ENCODE measurements at regions of chr1 and their contacts with region 1.

Region 1: DNA sequence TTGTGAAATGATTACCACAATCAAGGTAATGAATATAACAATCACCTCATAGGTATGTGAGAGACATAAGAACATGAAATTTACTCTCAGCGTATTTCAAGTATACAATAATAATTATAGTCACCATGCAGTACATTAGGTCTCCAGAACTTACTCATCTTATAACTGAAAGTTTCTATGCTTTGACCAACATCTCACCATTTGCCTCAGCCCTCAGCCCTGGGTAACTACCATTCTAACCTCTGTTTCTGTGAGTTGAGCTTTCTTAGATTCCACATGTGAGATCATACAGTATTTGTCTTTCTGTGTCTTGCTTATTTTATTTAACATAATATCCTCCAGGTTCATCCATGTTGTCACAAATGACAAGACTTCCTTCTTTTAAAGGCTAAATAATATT is 57.3 kb downstream of the AGO3 start:
- DNase-seq: no peak
- ATAC-seq: peak; percentile 39
- H3K4me3 Mint-ChIP-seq: no peak overlapping the region
- H3K27ac Mint-ChIP-seq: no peak overlapping the region
- H3K4me1 Mint-ChIP-seq: no peaks in the 10 kb centered on the region
- H3K27me3 Mint-ChIP-seq: no peaks in the 10 kb centered on the region

Region 2: DNA sequence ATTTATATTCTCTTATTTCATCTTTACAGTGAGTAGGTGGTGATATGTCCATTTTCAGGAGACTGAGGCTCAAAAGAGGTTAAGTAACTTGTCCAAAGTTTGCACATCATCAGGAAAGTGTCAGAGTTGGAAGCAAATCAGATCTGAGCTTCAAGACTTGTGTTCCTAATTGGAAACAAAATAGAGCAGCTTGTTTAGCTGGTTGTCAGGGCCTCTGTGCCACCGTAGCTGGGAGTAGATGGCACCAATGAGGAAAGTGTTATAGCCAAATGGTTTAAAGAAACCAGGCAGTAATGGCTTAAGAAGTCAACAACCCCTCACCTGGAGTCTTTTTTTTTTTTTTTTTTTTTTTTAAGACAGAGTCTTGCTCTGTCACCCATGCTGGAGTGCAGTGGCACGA is 85.6 kb before region 1 on chr1:
- CTCF ChIA-PET with region 1: no interaction called
- POLR2A ChIA-PET with region 1: interaction called, 11 read pairs
- intact Hi-C with region 1: no loop called
- DNase-seq: no peak
- ATAC-seq: no peak
- H3K4me3 Mint-ChIP-seq: no peak overlapping the region
- H3K27ac Mint-ChIP-seq: peak overlapping the region; percentile 25
- H3K4me1 Mint-ChIP-seq: no peaks in the 10 kb centered on the region
- H3K27me3 Mint-ChIP-seq: no peaks in the 10 kb centered on the region

Measured in activated CD4-positive, alpha-beta T cell treated with anti-CD3 and anti-CD28 coated beads for 36 hours (primary cell).